ENCODE measurements at regions of chr6 and their contacts with region 1.

Region 1: DNA sequence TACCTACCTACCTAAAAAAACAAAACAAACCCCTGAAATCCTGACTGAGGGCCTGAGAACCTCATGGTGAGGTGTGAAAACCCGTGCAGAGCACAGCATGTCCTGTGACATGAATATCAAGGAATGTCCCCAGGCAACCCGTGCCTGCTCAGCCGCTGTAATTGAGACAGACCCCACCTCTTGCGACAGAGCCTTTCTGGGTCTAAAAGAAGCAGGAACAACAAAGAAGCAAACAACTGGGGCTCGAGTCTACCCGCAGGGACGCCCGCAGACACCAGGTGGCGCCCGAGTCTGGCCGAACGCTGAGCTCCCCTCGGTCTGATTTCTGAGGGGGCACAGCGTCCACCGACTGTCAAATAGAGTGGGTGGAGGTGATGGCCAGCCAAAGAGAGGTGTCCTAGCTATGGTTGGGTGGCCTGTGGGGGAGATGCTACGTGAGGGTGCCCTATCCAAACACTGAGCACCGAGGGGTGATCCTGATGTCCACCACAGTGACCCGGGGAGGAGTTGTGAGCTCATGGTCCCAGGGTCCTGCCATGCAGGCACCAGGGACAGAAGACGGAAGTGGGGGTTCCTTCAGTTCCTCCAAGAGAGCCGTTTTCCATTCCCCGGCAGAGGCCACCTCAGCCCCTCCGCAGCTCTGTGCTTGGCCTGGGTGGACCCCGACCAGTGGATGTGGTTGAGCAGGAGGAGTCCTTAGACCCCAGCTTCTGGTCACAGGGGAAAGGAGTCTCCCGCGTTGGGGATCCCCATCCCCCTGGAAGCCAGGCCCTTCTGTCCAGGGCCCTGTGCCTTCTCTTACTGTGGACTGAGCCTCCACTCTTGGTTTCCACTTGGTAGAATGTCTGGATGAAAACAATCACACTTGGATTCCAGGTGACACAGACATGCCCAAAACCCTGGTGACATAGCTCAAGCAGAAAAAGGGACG is 268.2 kb downstream of the CDC5L start:
- DNase-seq: peak; percentile 76
- H3K4me3 ChIP-seq: no peak overlapping the region
- H3K27ac ChIP-seq: no peak overlapping the region
- H3K4me1 ChIP-seq: peaks cover 46% of the 10 kb centered on the region
- H3K27me3 ChIP-seq: no peaks in the 10 kb centered on the region

Region 2: DNA sequence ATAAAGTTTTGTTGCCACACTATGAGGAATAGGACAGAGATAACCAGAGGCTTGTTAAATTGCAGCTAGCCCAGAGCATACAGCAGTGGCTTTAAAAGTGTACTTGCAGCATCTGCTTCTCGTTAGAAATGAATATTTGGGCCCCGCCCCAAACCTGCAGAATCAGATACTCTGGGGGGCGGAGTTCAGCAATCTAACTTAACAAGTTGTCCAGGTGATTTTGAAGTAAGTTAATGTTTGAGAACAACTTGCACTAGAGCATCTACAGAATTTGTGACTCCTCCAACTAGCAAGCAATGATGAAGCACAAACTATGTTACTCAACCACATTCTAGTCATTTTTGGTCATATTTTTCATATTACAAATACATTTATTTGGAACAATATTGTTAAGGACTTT is 732.7 kb after region 1 on chr6:
- in situ Hi-C with region 1: no loop called
- DNase-seq: peak; percentile 73
- H3K4me3 ChIP-seq: peak overlapping the region; percentile 29; the same call in 1 of the 2 replicates
- H3K27ac ChIP-seq: peak overlapping the region; percentile 83
- H3K4me1 ChIP-seq: peaks cover 36% of the 10 kb centered on the region
- H3K27me3 ChIP-seq: no peaks in the 10 kb centered on the region

Region 3: GRCh38 chr6:45419571-45420082 is 764.0 kb after region 1 on chr6:
- in situ Hi-C with region 1: loop called (anchors 10 kb)
- DNase-seq: no peak
- H3K4me3 ChIP-seq: peak overlapping the region; percentile 98; the same call in 1 of the 2 replicates
- H3K27ac ChIP-seq: no peak overlapping the region
- H3K4me1 ChIP-seq: peaks cover 34% of the 10 kb centered on the region
- H3K27me3 ChIP-seq: no peaks in the 10 kb centered on the region

Measured in GM23248 (cell line).